ENCODE measurements at regions of chr5 and their contacts with region 1.

Region 1: GRCh38 chr5:52948418-52949076 is 40.6 kb upstream of the ITGA2 start:
- DNase-seq: peak; percentile 64 to 72 (median 66)
- H3K4me3 ChIP-seq: no peak overlapping the region
- H3K4me3 Mint-ChIP-seq: no peak overlapping the region
- H3K27ac ChIP-seq: no peak overlapping the region
- H3K27ac Mint-ChIP-seq: no peak overlapping the region
- H3K4me1 ChIP-seq: peaks cover 9% of the 10 kb centered on the region
- H3K4me1 Mint-ChIP-seq: peaks cover 8 to 13% (median 11%) of the 10 kb centered on the region in 4 donors
- H3K27me3 ChIP-seq: no peaks in the 10 kb centered on the region
- H3K27me3 Mint-ChIP-seq: no peaks in the 10 kb centered on the region

Region 2: GRCh38 chr5:53031695-53032096 is 83.1 kb after region 1 on chr5:
- CTCF ChIA-PET with region 1: interaction called, 5 read pairs
- POLR2A ChIA-PET with region 1: no interaction called
- intact Hi-C with region 1: loop called (anchors 5 kb)
- DNase-seq: peak; percentile 7 to 60 (median 46)
- H3K4me3 ChIP-seq: no peak overlapping the region
- H3K4me3 Mint-ChIP-seq: peak overlapping the region in 2 of 8 donors; percentile 45
- H3K27ac ChIP-seq: no peak overlapping the region
- H3K27ac Mint-ChIP-seq: peak overlapping the region; percentile 5 to 90 (median 57)
- H3K4me1 ChIP-seq: peaks cover 16% of the 10 kb centered on the region
- H3K4me1 Mint-ChIP-seq: peaks cover 9 to 31% (median 14%) of the 10 kb centered on the region in 4 donors
- H3K27me3 ChIP-seq: no peaks in the 10 kb centered on the region
- H3K27me3 Mint-ChIP-seq: no peaks in the 10 kb centered on the region

Region 3: GRCh38 chr5:53052499-53052898 is 104.0 kb after region 1 on chr5:
- CTCF ChIA-PET with region 1: no interaction called
- POLR2A ChIA-PET with region 1: no interaction called
- intact Hi-C with region 1: no loop called
- DNase-seq: no peak
- H3K4me3 ChIP-seq: no peak overlapping the region
- H3K4me3 Mint-ChIP-seq: no peak overlapping the region
- H3K27ac ChIP-seq: no peak overlapping the region
- H3K27ac Mint-ChIP-seq: no peak overlapping the region
- H3K4me1 ChIP-seq: no peaks in the 10 kb centered on the region
- H3K4me1 Mint-ChIP-seq: no peaks in the 10 kb centered on the region
- H3K27me3 ChIP-seq: no peaks in the 10 kb centered on the region
- H3K27me3 Mint-ChIP-seq: no peaks in the 10 kb centered on the region

Region 4: GRCh38 chr5:53095931-53096525 is 147.5 kb after region 1 on chr5:
- CTCF ChIA-PET with region 1: interaction called, 120 read pairs
- POLR2A ChIA-PET with region 1: interaction called, 4 read pairs
- intact Hi-C with region 1: loop called (anchors 1 kb)
- DNase-seq: peak; percentile 58 to 67 (median 59)
- H3K4me3 ChIP-seq: no peak overlapping the region
- H3K4me3 Mint-ChIP-seq: no peak overlapping the region
- H3K27ac ChIP-seq: no peak overlapping the region
- H3K27ac Mint-ChIP-seq: no peak overlapping the region
- H3K4me1 ChIP-seq: no peaks in the 10 kb centered on the region
- H3K4me1 Mint-ChIP-seq: no peaks in the 10 kb centered on the region
- H3K27me3 ChIP-seq: no peaks in the 10 kb centered on the region
- H3K27me3 Mint-ChIP-seq: no peaks in the 10 kb centered on the region

Region 5: DNA sequence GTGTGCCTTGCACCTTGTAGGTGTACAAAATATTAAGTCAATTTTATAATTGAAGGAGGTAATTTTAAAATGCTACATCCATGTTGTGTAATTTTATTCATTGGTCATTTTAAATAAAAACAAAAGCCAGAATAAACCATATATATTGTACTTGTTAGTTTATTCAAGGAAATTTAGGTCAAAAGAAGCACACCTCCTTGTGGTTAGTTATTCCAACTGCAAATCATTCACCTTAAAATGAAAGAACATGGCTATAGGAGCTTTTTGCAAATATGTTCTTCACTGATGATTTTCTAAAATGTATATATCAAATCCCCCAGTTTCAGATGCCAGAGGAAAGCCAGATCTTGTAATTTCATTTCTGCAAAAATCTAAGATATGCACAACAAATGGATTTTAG is 166.4 kb after region 1 on chr5:
- CTCF ChIA-PET with region 1: interaction called, 21 read pairs
- POLR2A ChIA-PET with region 1: interaction called, 5 read pairs
- intact Hi-C with region 1: no loop called
- DNase-seq: no peak
- H3K4me3 ChIP-seq: no peak overlapping the region
- H3K4me3 Mint-ChIP-seq: no peak overlapping the region
- H3K27ac ChIP-seq: no peak overlapping the region
- H3K27ac Mint-ChIP-seq: no peak overlapping the region
- H3K4me1 ChIP-seq: peaks cover 10% of the 10 kb centered on the region
- H3K4me1 Mint-ChIP-seq: peaks cover 8 to 10% (median 10%) of the 10 kb centered on the region in 4 donors
- H3K27me3 ChIP-seq: no peaks in the 10 kb centered on the region
- H3K27me3 Mint-ChIP-seq: peaks cover 0 to 1% of the 10 kb centered on the region in 2 donors

Region 6: GRCh38 chr5:54080831-54081230 is 1132.3 kb after region 1 on chr5:
- CTCF ChIA-PET with region 1: no interaction called
- POLR2A ChIA-PET with region 1: no interaction called
- intact Hi-C with region 1: no loop called
- DNase-seq: no peak
- H3K4me3 ChIP-seq: no peak overlapping the region
- H3K4me3 Mint-ChIP-seq: no peak overlapping the region
- H3K27ac ChIP-seq: no peak overlapping the region
- H3K27ac Mint-ChIP-seq: no peak overlapping the region
- H3K4me1 ChIP-seq: no peaks in the 10 kb centered on the region
- H3K4me1 Mint-ChIP-seq: peaks cover 0 to 4% (median 0%) of the 10 kb centered on the region in 4 donors
- H3K27me3 ChIP-seq: no peaks in the 10 kb centered on the region
- H3K27me3 Mint-ChIP-seq: no peaks in the 10 kb centered on the region

Region 7: DNA sequence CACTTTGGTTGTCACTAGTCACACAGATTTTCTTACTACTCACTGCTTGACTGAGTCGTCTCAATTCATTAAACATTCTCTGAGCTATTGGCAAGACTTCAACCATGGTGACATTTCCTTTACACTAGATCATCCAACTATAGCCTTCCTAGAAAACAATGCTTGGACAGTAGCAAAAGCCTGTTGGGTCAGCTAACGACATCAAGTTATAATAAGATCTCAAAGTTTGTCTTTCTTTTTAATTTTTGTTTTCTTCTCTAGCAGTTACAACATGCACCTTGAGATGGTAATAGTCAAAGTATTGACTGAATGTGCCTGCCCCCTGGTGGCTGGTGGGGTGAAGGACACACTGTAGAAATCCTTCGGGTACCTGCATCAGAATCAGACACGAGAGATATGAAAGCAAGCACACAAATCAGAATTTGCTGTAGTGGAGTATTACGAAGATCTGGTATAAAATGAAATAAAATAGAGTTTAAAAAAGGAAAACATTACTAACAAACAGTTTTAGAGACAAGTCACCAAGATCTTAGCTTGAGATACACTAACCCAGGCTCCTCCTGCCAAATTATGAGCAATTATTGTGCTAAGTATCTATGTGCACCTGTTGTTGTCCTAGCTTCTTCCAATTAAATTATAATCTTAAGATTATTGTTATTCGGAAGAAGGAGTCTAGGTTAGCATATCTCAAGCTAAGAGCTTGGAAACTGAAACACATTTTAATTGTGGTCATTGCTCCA is 1280.7 kb after region 1 on chr5:
- CTCF ChIA-PET with region 1: interaction called, 10 read pairs
- POLR2A ChIA-PET with region 1: no interaction called
- intact Hi-C with region 1: loop called (anchors 1 kb)
- DNase-seq: peak; percentile 43 to 59 (median 58)
- H3K4me3 ChIP-seq: no peak overlapping the region
- H3K4me3 Mint-ChIP-seq: peak overlapping the region in 2 of 8 donors; percentile 31 to 68
- H3K27ac ChIP-seq: no peak overlapping the region
- H3K27ac Mint-ChIP-seq: peak overlapping the region in 2 of 7 donors; percentile 2 to 11
- H3K4me1 ChIP-seq: no peaks in the 10 kb centered on the region
- H3K4me1 Mint-ChIP-seq: peaks cover 5 to 18% (median 15%) of the 10 kb centered on the region in 4 donors
- H3K27me3 ChIP-seq: no peaks in the 10 kb centered on the region
- H3K27me3 Mint-ChIP-seq: no peaks in the 10 kb centered on the region

Measured in CD4-positive, alpha-beta memory T cell (primary cell).